Esophagus squamous epithelium (tissue), 5 donors: ENCODE measurements at regions of chr11 and their contacts with region 1.

Region 1: GRCh38 chr11:73393479-73394380 is 17.5 kb downstream of the RELT start:
- DNase-seq: peak; percentile 28
- H3K4me3 ChIP-seq: no peak overlapping the region
- H3K27ac ChIP-seq: no peak overlapping the region
- H3K4me1 ChIP-seq: peaks cover 4 to 15% (median 7%) of the 10 kb centered on the region in 3 donors
- H3K27me3 ChIP-seq: no peaks in the 10 kb centered on the region
- CTCF ChIP-seq: peak; percentile 34 to 90 (median 82)
- POLR2A ChIP-seq: no peak

Region 2: GRCh38 chr11:73350908-73351636 is 42.7 kb before region 1 on chr11:
- intact Hi-C with region 1: loop called (anchors 5 kb)
- DNase-seq: no peak
- H3K4me3 ChIP-seq: no peak overlapping the region
- H3K27ac ChIP-seq: peak overlapping the region in 1 of 4 donors; percentile 16
- H3K4me1 ChIP-seq: peaks cover 4 to 19% (median 4%) of the 10 kb centered on the region in 3 donors
- H3K27me3 ChIP-seq: no peaks in the 10 kb centered on the region
- CTCF ChIP-seq: peak; percentile 85 to 99 (median 95)
- POLR2A ChIP-seq: no peak